ENCODE measurements at regions of chr11 and their contacts with region 1.

Region 1: DNA sequence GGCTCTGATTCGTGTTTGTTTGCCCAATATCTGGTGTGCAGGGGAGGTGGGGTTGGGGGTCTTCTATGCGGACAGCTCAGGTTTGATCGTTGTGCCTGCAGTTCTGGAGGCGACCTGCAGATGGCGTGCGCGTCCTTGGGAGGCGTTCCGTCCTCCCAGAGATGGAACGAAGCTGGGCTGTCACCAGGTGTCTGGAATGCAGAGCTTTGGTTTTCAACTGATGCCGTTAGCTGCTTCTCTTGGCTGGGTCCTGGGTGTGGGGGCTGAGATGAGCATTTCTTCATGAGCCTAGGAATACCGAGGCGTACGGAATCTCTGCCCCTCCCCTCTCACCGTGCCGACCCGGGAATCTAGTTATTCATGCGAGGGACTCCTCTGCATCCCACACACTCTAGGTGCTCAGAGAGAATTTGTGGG is 98.6 kb downstream of the CEP164 start:
- DNase-seq: no peak
- ATAC-seq: peak; percentile 83
- H3K4me3 ChIP-seq: no peak overlapping the region
- H3K27ac ChIP-seq: no peak overlapping the region
- H3K4me1 ChIP-seq: no peaks in the 10 kb centered on the region
- H3K27me3 ChIP-seq: no peaks in the 10 kb centered on the region
- CTCF ChIP-seq: peak; percentile 96 to 100 (median 98)
- EP300 ChIP-seq: no peak
- POLR2A ChIP-seq: no peak
- RAD21 ChIP-seq: peak; percentile 95

Region 2: GRCh38 chr11:117410861-117411710 is 15.2 kb before region 1 on chr11:
- CTCF ChIA-PET with region 1: interaction called, 38 read pairs
- POLR2A ChIA-PET with region 1: no interaction called
- RAD21 ChIA-PET with region 1: no interaction called
- SMC1A ChIA-PET with region 1: interaction called, 5 read pairs
- in situ Hi-C with region 1: no loop called
- intact Hi-C with region 1: no loop called
- DNase-seq: no peak
- ATAC-seq: no peak
- H3K4me3 ChIP-seq: no peak overlapping the region
- H3K27ac ChIP-seq: no peak overlapping the region
- H3K4me1 ChIP-seq: peaks cover 4% of the 10 kb centered on the region; the same call in 1 of the 2 replicates
- H3K27me3 ChIP-seq: no peaks in the 10 kb centered on the region
- CTCF ChIP-seq: no peak
- EP300 ChIP-seq: no peak
- POLR2A ChIP-seq: no peak
- RAD21 ChIP-seq: 0 out of 2 replicates have a peak, but pooled peaks have one; percentile 3

Region 3: GRCh38 chr11:117468888-117469287 is 42.6 kb after region 1 on chr11:
- CTCF ChIA-PET with region 1: interaction called, 19 read pairs
- POLR2A ChIA-PET with region 1: no interaction called
- RAD21 ChIA-PET with region 1: interaction called, 15 read pairs
- SMC1A ChIA-PET with region 1: interaction called, 7 read pairs
- in situ Hi-C with region 1: no loop called
- intact Hi-C with region 1: no loop called
- DNase-seq: no peak
- ATAC-seq: peak; percentile 72
- H3K4me3 ChIP-seq: no peak overlapping the region
- H3K27ac ChIP-seq: no peak overlapping the region
- H3K4me1 ChIP-seq: no peaks in the 10 kb centered on the region
- H3K27me3 ChIP-seq: no peaks in the 10 kb centered on the region; a peak in 1 of 4 replicates
- CTCF ChIP-seq: peak in 2 of 3 experiments; percentile 34 to 43; a peak in 3 of 6 replicates
- EP300 ChIP-seq: no peak
- POLR2A ChIP-seq: no peak
- RAD21 ChIP-seq: peak; percentile 34; the same call in 1 of the 2 replicates

Region 4: GRCh38 chr11:117498746-117499145 is 72.5 kb after region 1 on chr11:
- CTCF ChIA-PET with region 1: interaction called, 4 read pairs
- POLR2A ChIA-PET with region 1: no interaction called
- RAD21 ChIA-PET with region 1: interaction called, 3 read pairs
- SMC1A ChIA-PET with region 1: interaction called, 11 read pairs
- in situ Hi-C with region 1: no loop called
- intact Hi-C with region 1: no loop called
- DNase-seq: no peak
- ATAC-seq: no peak
- H3K4me3 ChIP-seq: no peak overlapping the region
- H3K27ac ChIP-seq: no peak overlapping the region
- H3K4me1 ChIP-seq: no peaks in the 10 kb centered on the region
- H3K27me3 ChIP-seq: peaks cover 0 to 2% of the 10 kb centered on the region in 2 experiments; a peak in 2 of 4 replicates
- CTCF ChIP-seq: no peak
- EP300 ChIP-seq: no peak
- POLR2A ChIP-seq: no peak
- RAD21 ChIP-seq: no peak

Region 5: DNA sequence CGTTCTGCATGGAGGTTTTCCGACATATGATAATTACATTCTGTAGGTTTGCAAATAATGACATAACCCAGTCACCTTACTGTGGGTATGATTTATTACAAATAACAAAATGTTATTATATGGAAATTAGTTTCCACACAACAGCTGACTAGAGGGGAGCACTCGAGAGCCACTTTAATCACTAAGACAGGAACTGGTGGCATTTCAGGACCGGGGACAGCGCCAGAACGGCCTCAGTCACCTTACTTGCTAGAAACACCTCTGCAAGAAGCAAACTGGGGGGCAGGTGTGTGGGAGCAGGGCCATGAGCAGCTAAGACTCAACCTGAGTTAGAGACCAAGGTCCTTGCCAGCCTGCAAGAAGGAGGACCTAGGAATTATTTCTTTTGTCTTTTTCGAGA is 170.8 kb after region 1 on chr11:
- CTCF ChIA-PET with region 1: interaction called, 11 read pairs
- POLR2A ChIA-PET with region 1: no interaction called
- RAD21 ChIA-PET with region 1: interaction called, 4 read pairs
- SMC1A ChIA-PET with region 1: no interaction called
- in situ Hi-C with region 1: no loop called
- intact Hi-C with region 1: no loop called
- DNase-seq: no peak
- ATAC-seq: peak; percentile 47; the same call in 2 of the 3 replicates
- H3K4me3 ChIP-seq: no peak overlapping the region
- H3K27ac ChIP-seq: no peak overlapping the region
- H3K4me1 ChIP-seq: no peaks in the 10 kb centered on the region
- H3K27me3 ChIP-seq: peaks cover 2% of the 10 kb centered on the region in 2 experiments
- CTCF ChIP-seq: no peak
- EP300 ChIP-seq: no peak
- POLR2A ChIP-seq: no peak
- RAD21 ChIP-seq: no peak

Region 6: DNA sequence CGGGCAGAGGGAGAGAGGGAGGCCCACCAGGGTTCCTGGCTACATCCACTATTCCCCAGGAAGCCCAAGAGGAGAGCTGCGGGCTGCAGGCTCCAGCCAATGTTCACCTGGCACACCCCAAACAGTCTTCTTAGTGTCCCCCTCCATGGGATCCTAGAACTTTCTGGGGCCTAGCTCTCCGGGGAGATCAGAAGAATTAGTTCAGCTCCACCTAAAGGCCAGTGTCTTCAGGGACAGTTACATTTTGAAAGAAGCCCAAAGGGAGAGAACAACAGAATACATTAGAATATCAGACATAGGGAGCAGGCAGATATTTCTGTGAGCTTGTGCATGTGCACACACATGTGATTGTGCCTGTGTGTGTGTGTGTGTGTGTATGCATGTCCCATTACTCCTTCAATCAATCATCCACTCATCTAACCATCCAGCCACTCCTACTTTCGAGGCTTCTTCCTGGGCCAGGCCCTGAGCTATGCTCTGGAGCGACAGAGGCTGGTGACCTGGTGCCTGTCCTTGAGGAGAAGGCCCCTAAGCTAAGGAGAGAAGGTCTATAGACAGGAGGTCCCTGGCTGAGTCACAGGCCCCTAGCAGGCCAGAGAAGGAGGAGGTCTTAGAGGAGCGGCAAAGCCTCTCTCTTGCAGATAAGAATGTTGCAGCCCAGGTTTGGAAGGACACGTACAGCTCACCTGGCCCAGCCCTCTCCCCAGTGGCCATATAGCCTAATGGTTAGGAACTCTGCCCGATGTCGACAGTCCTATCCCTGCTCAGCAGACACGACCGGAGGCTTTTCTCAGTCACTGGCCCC is 205.3 kb after region 1 on chr11:
- CTCF ChIA-PET with region 1: interaction called, 14 read pairs
- POLR2A ChIA-PET with region 1: no interaction called
- RAD21 ChIA-PET with region 1: interaction called, 4 read pairs
- SMC1A ChIA-PET with region 1: interaction called, 6 read pairs
- in situ Hi-C with region 1: no loop called
- intact Hi-C with region 1: no loop called
- DNase-seq: no peak
- ATAC-seq: no peak
- H3K4me3 ChIP-seq: no peak overlapping the region
- H3K27ac ChIP-seq: no peak overlapping the region
- H3K4me1 ChIP-seq: no peaks in the 10 kb centered on the region
- H3K27me3 ChIP-seq: peaks cover 4 to 6% of the 10 kb centered on the region in 2 experiments; a peak in 3 of 4 replicates
- CTCF ChIP-seq: peak in 1 of 3 experiments; percentile 28; a peak in 2 of 6 replicates
- EP300 ChIP-seq: no peak
- POLR2A ChIP-seq: no peak
- RAD21 ChIP-seq: 0 out of 2 replicates have a peak, but pooled peaks have one; percentile 13

Region 7: GRCh38 chr11:117807482-117808327 is 381.4 kb after region 1 on chr11:
- CTCF ChIA-PET with region 1: interaction called, 83 read pairs
- POLR2A ChIA-PET with region 1: interaction called, 3 read pairs
- RAD21 ChIA-PET with region 1: interaction called, 56 read pairs
- SMC1A ChIA-PET with region 1: interaction called, 33 read pairs
- in situ Hi-C with region 1: no loop called
- intact Hi-C with region 1: loop called (anchors 5 kb)
- DNase-seq: no peak
- ATAC-seq: peak; percentile 85
- H3K4me3 ChIP-seq: no peak overlapping the region
- H3K27ac ChIP-seq: no peak overlapping the region
- H3K4me1 ChIP-seq: peaks cover 17% of the 10 kb centered on the region
- H3K27me3 ChIP-seq: no peaks in the 10 kb centered on the region
- CTCF ChIP-seq: peak; percentile 86 to 91 (median 89)
- EP300 ChIP-seq: no peak
- POLR2A ChIP-seq: no peak
- RAD21 ChIP-seq: peak; percentile 95